ENCODE measurements at regions of chrX and their contacts with region 1.

Region 1: GRCh38 chrX:104922206-104922621 is 298.3 kb downstream of the TEX13A start:
- DNase-seq: peak; percentile 57 to 72 (median 65)
- ATAC-seq: peak; percentile 68 to 71
- H3K4me3 ChIP-seq: no peak overlapping the region
- H3K27ac ChIP-seq: no peak overlapping the region
- H3K4me1 ChIP-seq: no peaks in the 10 kb centered on the region
- H3K27me3 ChIP-seq: no peaks in the 10 kb centered on the region

Region 2: DNA sequence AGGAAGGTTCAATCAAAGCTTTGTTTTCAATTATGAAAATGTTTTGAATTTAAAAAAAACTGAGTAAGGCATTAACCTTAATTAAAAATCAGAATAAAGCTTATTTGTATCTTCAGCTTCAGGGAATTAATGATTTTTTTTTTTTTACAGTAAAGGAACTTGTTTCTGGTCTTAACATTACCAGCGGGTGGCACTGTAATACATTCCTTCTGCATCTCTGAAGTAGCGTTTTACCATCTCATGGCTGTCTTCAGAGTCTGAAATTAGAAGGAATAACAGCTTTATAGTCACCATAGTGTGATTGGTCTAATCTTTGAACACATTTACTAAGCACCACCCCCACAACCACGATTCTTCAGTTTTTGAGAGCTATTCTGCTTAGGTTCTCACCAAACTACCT is 253.7 kb before region 1 on chrX:
- intact Hi-C with region 1: loop called in 1 of 4 experiments (anchors 10 kb)
- DNase-seq: no peak
- ATAC-seq: no peak
- H3K4me3 ChIP-seq: no peak overlapping the region
- H3K27ac ChIP-seq: no peak overlapping the region
- H3K4me1 ChIP-seq: no peaks in the 10 kb centered on the region
- H3K27me3 ChIP-seq: no peaks in the 10 kb centered on the region

Region 3: GRCh38 chrX:105502336-105502735 is 580.1 kb after region 1 on chrX:
- intact Hi-C with region 1: no loop called
- DNase-seq: no peak
- ATAC-seq: no peak
- H3K4me3 ChIP-seq: no peak overlapping the region
- H3K27ac ChIP-seq: no peak overlapping the region
- H3K4me1 ChIP-seq: no peaks in the 10 kb centered on the region
- H3K27me3 ChIP-seq: no peaks in the 10 kb centered on the region

Measured in right cardiac atrium (tissue), 5 donors.